ENCODE measurements at regions of chr14 and their contacts with region 1.

Region 1: GRCh38 chr14:60724137-60724619 is at the start of gene SIX4:
- DNase-seq: peak; percentile 37
- H3K4me3 ChIP-seq: peak within 1 kb of the TSS; percentile 94
- H3K27me3 ChIP-seq: no peaks in the 10 kb centered on the region
- CTCF ChIP-seq: no peak
- polyA plus RNA-seq, gene SIX4: 4.7 and 7.9 TPM in 2 replicates

Region 2: GRCh38 chr14:60495946-60496345 is 228.2 kb before region 1 on chr14:
- CTCF ChIA-PET with region 1: no interaction called
- POLR2A ChIA-PET with region 1: no interaction called
- DNase-seq: no peak
- H3K4me3 ChIP-seq: no peak overlapping the region
- H3K27me3 ChIP-seq: no peaks in the 10 kb centered on the region; the same call in 1 of the 2 replicates
- CTCF ChIP-seq: no peak

Region 3: DNA sequence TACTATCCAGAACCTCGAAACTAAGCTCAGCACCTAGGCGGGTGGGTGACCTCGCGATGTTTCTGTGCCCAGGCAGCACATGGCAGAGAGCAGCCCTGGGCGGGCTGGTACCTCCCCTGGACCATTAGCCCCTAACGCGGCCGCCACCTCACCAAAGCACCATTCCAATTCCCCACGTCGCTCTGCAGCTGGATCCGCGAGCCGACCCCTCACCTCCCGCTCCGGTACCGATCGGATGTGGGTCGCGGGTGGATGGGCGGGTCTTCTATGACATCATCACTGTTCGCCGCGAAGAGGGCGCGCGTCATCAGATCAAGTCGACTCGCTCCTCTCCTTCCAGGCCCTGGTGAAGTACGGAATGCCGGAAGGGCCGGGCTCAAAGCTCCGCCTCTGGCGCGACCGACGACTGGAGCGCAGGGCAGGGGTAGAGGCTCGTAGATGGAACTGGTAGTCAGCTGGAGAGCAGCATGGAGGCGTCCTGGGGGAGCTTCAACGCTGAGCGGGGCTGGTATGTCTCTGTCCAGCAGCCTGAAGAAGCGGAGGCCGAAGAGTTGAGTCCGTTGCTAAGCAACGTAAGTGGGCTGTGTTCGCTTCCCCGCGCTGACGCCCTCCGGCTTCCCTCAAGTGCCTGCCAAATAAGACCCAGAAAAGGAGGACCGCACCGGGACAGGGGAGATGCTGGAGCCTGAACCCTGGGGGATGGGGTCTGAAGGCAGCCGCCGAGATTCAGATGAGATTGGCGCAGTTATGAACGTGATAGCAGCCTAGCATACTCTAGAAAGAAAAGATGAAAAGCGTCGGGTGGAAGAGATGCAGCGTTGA is 256.8 kb after region 1 on chr14 and contains the starts of genes SLC38A6 and TRMT5:
- CTCF ChIA-PET with region 1: no interaction called
- POLR2A ChIA-PET with region 1: interaction called, 11 read pairs
- DNase-seq: peak; percentile 85
- H3K4me3 ChIP-seq: peak within 1 kb of the TSS; percentile 77
- H3K27me3 ChIP-seq: no peaks in the 10 kb centered on the region
- CTCF ChIP-seq: 0 out of 2 replicates have a peak, but pooled peaks have one; percentile 4
- polyA plus RNA-seq, gene SLC38A6: 11.7 and 16.8 TPM in 2 replicates
- polyA plus RNA-seq, gene TRMT5: 3.0 and 6.4 TPM in 2 replicates

Region 4: DNA sequence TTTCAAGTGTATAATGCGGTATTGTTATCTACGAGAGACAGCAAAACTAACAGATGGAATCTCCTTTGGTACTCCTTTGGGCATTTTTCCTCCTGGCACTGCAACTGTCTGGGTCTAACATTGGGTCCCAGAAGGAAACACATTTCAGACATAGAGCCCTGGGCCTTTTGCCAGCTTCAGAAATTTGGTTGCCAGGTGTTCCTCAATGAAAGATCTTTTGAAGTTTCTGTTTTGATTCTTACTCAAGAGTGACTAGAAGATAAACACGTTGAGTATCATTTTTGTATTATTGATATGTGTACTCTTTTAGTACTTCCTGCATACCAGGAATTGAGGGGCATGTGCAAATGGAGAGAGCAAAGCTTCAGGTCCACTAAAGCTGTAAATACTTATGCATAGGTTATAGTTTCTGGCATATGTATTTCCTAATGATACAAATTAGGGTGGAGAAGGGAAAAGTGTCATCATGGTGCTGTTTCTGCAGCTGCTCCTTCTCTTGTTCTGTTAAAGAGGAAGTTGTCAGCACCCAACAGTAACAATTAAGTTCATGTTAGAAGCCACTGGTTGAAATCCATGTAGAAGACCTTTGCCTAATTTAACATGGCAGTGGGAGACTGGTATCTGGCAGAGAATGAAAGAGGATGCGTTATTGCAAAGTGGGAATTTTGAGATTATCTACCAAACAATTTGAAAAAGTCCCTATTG is 310.4 kb after region 1 on chr14:
- CTCF ChIA-PET with region 1: no interaction called
- POLR2A ChIA-PET with region 1: interaction called, 18 read pairs
- DNase-seq: no peak
- H3K4me3 ChIP-seq: no peak overlapping the region
- H3K27me3 ChIP-seq: no peaks in the 10 kb centered on the region
- CTCF ChIP-seq: no peak

Region 5: GRCh38 chr14:61103481-61104339 is 379.5 kb after region 1 on chr14:
- CTCF ChIA-PET with region 1: no interaction called
- POLR2A ChIA-PET with region 1: interaction called, 21 read pairs
- DNase-seq: peak; percentile 96
- H3K4me3 ChIP-seq: no peak overlapping the region
- H3K27me3 ChIP-seq: no peaks in the 10 kb centered on the region
- CTCF ChIP-seq: no peak